T-cell (primary cell): ENCODE measurements at regions of chr5 and their contacts with region 1.

Region 1: DNA sequence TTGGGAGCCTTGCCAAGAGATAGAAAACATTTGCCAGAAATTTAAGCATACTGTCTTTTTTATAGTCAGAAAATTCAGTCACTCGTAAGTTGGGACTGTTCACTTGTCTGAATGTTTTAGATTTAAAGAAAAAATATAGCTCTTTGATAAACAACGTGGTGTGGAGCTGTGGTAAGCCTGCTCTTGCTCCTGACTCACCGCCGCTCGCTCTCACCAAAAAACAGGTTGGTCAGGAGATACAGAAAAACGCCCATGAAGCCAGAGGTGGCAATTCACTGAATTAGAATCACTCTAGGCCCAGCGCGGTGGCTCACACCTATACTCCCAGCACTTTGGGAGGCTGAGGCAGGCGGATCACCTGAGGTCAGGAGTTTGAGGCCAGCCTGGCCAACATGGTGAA is 6.2 kb downstream of the LNPEP start:
- DNase-seq: peak in 4 of 35 experiments; percentile 23 to 31 (median 25)
- ATAC-seq: peak in 3 of 4 experiments; percentile 38 to 67 (median 52)
- H3K4me3 ChIP-seq: no peak overlapping the region
- H3K4me3 Mint-ChIP-seq: peak overlapping the region in 2 of 3 donors; percentile 2 to 31
- H3K27ac ChIP-seq: no peak overlapping the region
- H3K27ac Mint-ChIP-seq: peak overlapping the region; percentile 8 to 70
- H3K4me1 ChIP-seq: peaks cover 37 to 63% of the 10 kb centered on the region in 2 experiments
- H3K4me1 Mint-ChIP-seq: peaks cover 87 to 94% (median 93%) of the 10 kb centered on the region in 3 donors
- H3K27me3 ChIP-seq: no peaks in the 10 kb centered on the region
- H3K27me3 Mint-ChIP-seq: no peaks in the 10 kb centered on the region

Region 2: GRCh38 chr5:96969366-96969765 is 27.3 kb after region 1 on chr5:
- CTCF ChIA-PET with region 1: interaction called in 1 of 2 experiments, 10 read pairs
- POLR2A ChIA-PET with region 1: interaction called in 1 of 2 experiments, 3 read pairs
- DNase-seq: no peak
- ATAC-seq: no peak
- H3K4me3 ChIP-seq: no peak overlapping the region
- H3K4me3 Mint-ChIP-seq: no peak overlapping the region
- H3K27ac ChIP-seq: no peak overlapping the region
- H3K27ac Mint-ChIP-seq: peak overlapping the region in 1 of 2 donors; percentile 9
- H3K4me1 ChIP-seq: peaks cover 22 to 53% of the 10 kb centered on the region in 2 experiments
- H3K4me1 Mint-ChIP-seq: peaks cover 87 to 90% (median 90%) of the 10 kb centered on the region in 3 donors
- H3K27me3 ChIP-seq: no peaks in the 10 kb centered on the region
- H3K27me3 Mint-ChIP-seq: no peaks in the 10 kb centered on the region